Motor neuron (in vitro differentiated cells): ENCODE measurements at regions of chr20 and their contacts with region 1.

Region 1: DNA sequence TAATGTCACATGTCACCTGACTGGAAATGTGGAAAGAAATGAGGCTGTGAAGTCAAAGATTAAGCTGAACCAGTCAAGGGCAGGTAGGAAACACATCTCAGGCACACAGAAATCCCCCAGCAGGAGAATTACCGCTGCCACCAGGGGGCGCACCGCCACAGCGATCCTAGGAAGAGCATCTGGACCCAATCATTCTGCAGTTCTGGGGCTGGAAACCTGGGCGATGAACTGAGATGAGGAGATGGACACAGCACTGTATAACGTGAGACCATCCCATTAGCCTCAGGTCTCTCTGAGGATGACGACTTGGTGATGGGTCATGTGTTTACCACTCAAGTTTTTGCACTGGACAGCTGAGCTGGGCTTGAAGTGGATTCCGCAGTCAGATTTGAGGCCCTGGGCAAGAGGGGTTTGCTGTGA is 6.5 kb upstream of the SLC24A3 start:
- ATAC-seq: peak; percentile 28 to 77 (median 57)
- H3K4me3 ChIP-seq: no peak overlapping the region
- H3K27ac ChIP-seq: no peak overlapping the region
- H3K4me1 ChIP-seq: no peaks in the 10 kb centered on the region

Region 2: GRCh38 chr20:18632196-18633009 is 573.6 kb before region 1 on chr20:
- in situ Hi-C with region 1: loop called in 1 of 9 experiments (anchors 25 kb)
- ATAC-seq: peak; percentile 80 to 99 (median 92)
- H3K4me3 ChIP-seq: no peak overlapping the region
- H3K27ac ChIP-seq: no peak overlapping the region
- H3K4me1 ChIP-seq: peaks cover 25 to 45% of the 10 kb centered on the region in 2 donors

Region 3: GRCh38 chr20:19583532-19584175 is 377.7 kb after region 1 on chr20:
- in situ Hi-C with region 1: loop called in 4 of 9 experiments (anchors 10 to 25 kb)
- ATAC-seq: peak; percentile 79 to 95 (median 88)
- H3K4me3 ChIP-seq: no peak overlapping the region
- H3K27ac ChIP-seq: no peak overlapping the region
- H3K4me1 ChIP-seq: peaks cover 5 to 15% of the 10 kb centered on the region in 2 donors

Region 4: DNA sequence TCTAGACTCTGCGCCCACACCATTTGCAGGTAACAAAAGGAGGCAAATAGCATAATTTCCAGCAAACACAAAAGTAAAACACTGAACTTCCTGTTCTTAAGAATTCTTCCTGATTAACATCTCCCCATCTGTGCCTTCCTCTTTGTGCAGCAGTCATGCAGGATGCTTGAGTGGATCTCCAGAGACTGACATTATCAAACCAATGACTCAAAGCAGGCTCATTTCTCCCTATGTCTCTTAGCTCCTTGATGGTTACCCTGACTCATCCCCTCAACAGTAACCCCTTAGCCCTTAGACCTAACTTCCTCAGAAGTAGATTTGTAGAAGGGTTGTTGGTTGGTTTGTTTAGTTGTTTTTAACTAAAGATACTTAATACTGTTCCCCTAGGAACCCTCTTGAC is 415.1 kb after region 1 on chr20:
- in situ Hi-C with region 1: loop called in 1 of 9 experiments (anchors 25 kb)
- ATAC-seq: no peak
- H3K4me3 ChIP-seq: no peak overlapping the region
- H3K27ac ChIP-seq: no peak overlapping the region
- H3K4me1 ChIP-seq: no peaks in the 10 kb centered on the region

Region 5: DNA sequence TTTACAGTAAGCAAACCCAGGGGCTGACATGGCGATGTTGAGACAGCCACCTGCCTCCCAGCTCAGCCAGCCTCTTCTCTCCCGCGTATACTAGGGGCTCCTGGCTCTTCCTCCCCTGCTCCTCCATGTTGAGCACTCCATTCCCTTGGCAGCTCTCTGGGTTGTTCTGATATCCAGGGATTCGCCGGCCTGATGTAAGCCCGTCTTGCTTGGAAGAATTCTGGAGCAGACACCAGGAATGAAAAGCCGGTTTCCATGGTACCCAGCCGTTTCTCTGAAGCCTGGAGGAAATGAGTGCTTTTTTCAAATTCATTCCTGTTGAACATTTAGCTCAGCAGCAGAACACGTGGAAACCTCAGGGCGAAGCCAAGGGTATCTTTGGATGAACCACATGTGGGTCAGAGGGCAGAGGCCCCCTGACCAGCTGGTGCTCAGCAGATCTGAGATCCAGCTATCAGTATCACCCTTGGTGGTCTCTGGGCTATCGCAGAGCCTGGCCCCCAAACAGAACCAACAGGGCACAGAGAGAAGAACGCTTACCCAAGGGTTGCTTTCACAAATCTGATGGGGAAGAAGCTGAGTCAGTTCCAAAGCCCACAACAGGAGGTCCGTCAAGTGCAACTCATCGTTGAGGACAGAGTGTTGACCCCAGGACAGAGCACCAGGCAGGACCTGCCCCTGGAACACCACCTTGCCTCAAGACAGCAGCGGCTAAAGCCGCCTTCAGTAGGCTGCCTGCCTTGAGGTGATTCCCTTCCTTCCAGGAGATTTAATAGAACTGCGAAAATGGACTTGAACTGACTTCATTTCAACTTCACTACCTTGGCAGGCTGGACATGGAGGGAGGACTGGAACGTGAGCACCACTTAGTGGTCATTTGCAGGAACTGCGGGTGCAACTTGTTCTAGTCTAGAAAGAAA is 456.0 kb after region 1 on chr20:
- in situ Hi-C with region 1: loop called in 3 of 9 experiments (anchors 10 to 25 kb)
- ATAC-seq: peak; percentile 72 to 90 (median 78)
- H3K4me3 ChIP-seq: no peak overlapping the region
- H3K27ac ChIP-seq: no peak overlapping the region
- H3K4me1 ChIP-seq: peaks cover 8 to 13% of the 10 kb centered on the region in 2 donors